Naive thymus-derived CD4-positive, alpha-beta T cell (primary cell): ENCODE measurements at regions of chr17 and their contacts with region 1.

Region 1: DNA sequence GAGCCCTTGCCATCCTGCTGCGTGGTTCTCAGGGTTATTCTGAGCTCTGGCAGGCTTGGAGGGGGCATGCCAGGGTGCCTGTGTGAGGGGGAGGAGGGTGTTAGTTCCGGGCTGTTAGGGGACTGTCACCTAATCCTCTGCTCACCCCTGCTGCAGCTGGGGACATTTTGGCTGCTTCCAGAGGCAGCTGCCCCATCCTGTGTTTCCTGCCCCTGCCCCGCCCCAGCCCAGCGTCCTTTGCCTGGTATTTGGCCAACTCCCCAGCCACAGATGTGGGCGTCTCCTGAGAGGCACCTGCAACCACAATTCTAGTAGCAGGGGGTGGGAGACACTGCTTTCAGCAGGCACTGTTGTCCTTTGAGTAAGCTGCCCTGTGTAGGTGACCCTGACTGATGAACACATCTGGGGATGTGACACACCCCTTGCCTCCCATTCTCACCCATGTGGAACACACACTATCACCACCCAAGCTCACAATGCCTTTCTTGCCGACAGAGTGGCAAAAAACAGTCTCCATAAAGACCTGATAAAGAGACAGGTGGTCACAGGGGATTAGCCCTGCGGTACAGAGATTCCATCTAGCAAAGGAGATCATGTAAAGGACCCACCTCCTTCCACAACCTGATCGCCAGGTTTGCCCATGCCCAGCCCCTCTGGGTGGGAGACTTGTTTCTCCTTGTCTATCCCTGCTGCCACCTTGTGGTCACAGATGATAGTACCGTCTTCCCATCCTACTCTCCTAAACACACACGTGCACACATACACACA is at the start of gene CHRNE:
- DNase-seq: peak in 8 of 9 donors; percentile 63 to 80 (median 76)
- ATAC-seq: peak; percentile 41
- H3K4me3 ChIP-seq: peak within 1 kb of the TSS; percentile 29
- H3K4me3 Mint-ChIP-seq: peak within 1 kb of the TSS; percentile 37 to 84 (median 72)
- H3K27ac ChIP-seq: no peak within 1 kb of the TSS
- H3K27ac Mint-ChIP-seq: peak within 1 kb of the TSS; percentile 57 to 98 (median 71)
- H3K4me1 ChIP-seq: peaks cover 29 to 40% of the 10 kb centered on the region in 2 donors
- H3K4me1 Mint-ChIP-seq: peaks cover 14 to 46% (median 37%) of the 10 kb centered on the region in 7 donors
- H3K27me3 ChIP-seq: no peaks in the 10 kb centered on the region
- H3K27me3 Mint-ChIP-seq: peaks cover 0 to 20% (median 0%) of the 10 kb centered on the region in 5 donors
- total RNA-seq, gene CHRNE: 0.34 to 6.5 (median 1.0) TPM

Region 2: GRCh38 chr17:4565209-4566141 is 337.8 kb before region 1 on chr17:
- CTCF ChIA-PET with region 1: interaction called, 3 read pairs
- POLR2A ChIA-PET with region 1: no interaction called
- intact Hi-C with region 1: loop called (anchors 1 to 5 kb)
- DNase-seq: peak in 8 of 9 donors; percentile 29 to 60 (median 50)
- ATAC-seq: peak; percentile 90
- H3K4me3 ChIP-seq: no peak overlapping the region
- H3K4me3 Mint-ChIP-seq: peak overlapping the region in 9 of 10 donors; percentile 44 to 77 (median 70)
- H3K27ac ChIP-seq: no peak overlapping the region
- H3K27ac Mint-ChIP-seq: peak overlapping the region in 3 of 9 donors; percentile 15 to 41 (median 21)
- H3K4me1 ChIP-seq: peaks cover 7 to 11% of the 10 kb centered on the region in 2 donors
- H3K4me1 Mint-ChIP-seq: peaks cover 15 to 40% (median 33%) of the 10 kb centered on the region in 7 donors
- H3K27me3 ChIP-seq: no peaks in the 10 kb centered on the region
- H3K27me3 Mint-ChIP-seq: peaks cover 0 to 17% (median 0%) of the 10 kb centered on the region in 5 donors

Region 3: DNA sequence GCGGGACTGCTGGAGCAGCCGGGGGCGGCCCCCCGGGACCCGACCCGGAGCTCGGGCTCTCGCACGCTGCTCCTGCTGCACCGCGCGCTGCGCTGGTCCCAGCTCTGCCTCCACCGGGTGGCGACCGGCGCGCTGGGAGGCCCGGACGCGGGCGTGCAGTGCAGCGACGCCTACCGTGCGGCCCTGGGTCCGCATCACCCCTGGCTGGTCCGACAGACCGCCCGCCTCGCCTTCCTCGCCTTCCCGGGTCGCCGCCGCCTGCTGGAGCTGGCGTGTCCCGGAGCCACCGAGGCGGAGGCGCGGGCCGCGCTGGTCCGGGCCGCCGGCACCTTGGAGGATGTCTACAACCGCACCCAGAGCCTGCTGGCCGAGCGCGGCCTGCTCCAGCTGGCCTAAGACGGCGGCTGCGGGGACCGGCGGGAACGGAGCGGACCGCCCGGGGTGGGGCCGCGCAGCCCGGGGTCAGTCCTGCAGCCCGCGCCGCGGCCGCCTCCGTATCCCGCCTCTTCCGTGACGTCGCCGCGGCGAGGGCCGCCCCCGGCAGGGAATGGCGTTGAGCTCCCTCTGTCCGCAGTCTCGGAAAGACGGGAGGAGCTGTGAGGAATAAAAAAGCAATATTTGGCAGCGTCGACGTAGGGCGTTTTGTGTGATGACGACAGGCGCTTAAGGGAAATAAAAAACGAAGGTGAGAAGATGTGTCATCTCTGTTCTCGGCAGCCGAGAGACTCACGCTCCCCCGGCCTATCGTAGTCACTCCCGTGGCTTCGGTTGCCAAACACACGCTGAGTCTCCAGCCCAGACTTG is 113.1 kb before region 1 on chr17:
- CTCF ChIA-PET with region 1: interaction called, 4 read pairs
- POLR2A ChIA-PET with region 1: no interaction called
- intact Hi-C with region 1: loop called in 1 of 2 experiments (anchors 5 kb)
- DNase-seq: peak; percentile 66 to 87 (median 78)
- ATAC-seq: peak; percentile 93
- H3K4me3 ChIP-seq: peak overlapping the region; percentile 75
- H3K4me3 Mint-ChIP-seq: peak overlapping the region; percentile 67 to 94 (median 88)
- H3K27ac ChIP-seq: peak overlapping the region; percentile 73
- H3K27ac Mint-ChIP-seq: peak overlapping the region; percentile 1 to 93 (median 89)
- H3K4me1 ChIP-seq: peaks cover 15 to 20% of the 10 kb centered on the region in 2 donors
- H3K4me1 Mint-ChIP-seq: peaks cover 11 to 34% (median 19%) of the 10 kb centered on the region in 7 donors
- H3K27me3 ChIP-seq: peaks cover 0 to 11% of the 10 kb centered on the region in 2 donors
- H3K27me3 Mint-ChIP-seq: peaks cover 23 to 49% (median 31%) of the 10 kb centered on the region in 5 donors

Region 4: DNA sequence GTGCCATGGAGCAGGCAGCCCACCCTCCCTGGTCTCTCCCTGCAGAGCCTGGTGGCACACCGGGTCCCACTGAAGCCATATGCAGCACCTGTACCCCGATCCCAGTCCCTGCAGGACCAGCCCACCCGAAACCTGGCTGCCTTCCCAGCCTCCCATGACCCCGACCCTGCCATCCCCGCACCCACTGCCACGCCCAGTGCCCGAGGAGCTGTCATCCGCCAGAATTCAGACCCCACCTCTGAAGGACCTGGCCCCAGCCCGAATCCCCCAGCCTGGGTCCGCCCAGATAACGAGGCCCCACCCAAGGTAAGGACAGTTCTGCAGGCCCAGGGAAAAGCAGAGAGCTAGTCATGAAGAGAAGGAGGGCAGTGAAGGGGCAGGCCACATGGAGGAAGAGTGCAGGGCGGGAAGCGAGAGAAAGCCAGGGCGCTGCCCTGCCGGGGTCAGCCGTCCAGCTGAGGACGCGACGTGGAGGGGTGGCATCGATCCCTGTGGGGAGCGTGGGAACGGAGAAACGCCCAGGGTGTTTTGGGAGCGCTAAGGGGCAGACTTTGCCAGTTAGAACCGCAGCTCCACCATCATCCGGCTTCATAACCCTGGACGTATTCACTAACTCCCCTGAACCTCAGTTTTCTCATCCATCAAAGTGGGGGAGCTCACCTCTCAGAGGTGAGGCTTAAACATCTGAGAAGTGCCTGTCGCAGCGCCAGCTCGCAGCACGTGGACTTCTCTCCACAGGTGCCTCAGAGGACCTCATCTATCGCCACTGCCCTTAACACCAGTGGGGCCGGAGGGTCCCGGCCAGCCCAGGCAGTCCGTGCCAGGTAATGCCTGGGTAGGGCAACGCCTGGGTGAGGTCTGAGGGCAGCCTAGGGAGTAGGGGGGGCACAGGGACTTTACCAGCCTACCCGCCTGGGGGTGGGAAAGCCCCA is 11.6 kb before region 1 on chr17:
- CTCF ChIA-PET with region 1: interaction called, 4 read pairs
- POLR2A ChIA-PET with region 1: no interaction called
- intact Hi-C with region 1: loop called in 1 of 2 experiments (anchors 1 kb)
- DNase-seq: no peak
- ATAC-seq: no peak
- H3K4me3 ChIP-seq: no peak overlapping the region
- H3K4me3 Mint-ChIP-seq: no peak overlapping the region
- H3K27ac ChIP-seq: no peak overlapping the region
- H3K27ac Mint-ChIP-seq: no peak overlapping the region
- H3K4me1 ChIP-seq: no peaks in the 10 kb centered on the region
- H3K4me1 Mint-ChIP-seq: peaks cover 0 to 5% (median 2%) of the 10 kb centered on the region in 7 donors
- H3K27me3 ChIP-seq: no peaks in the 10 kb centered on the region
- H3K27me3 Mint-ChIP-seq: no peaks in the 10 kb centered on the region

Region 5: GRCh38 chr17:4939796-4940624 is 36.8 kb after region 1 on chr17 and contains the starts of genes RNF167 and SLC25A11:
- CTCF ChIA-PET with region 1: no interaction called
- POLR2A ChIA-PET with region 1: interaction called, 25 read pairs
- intact Hi-C with region 1: loop called (anchors 1 to 2 kb)
- DNase-seq: peak; percentile 86 to 99 (median 98)
- ATAC-seq: peak; percentile 94
- H3K4me3 ChIP-seq: peak within 1 kb of the TSS; percentile 89
- H3K4me3 Mint-ChIP-seq: peak within 1 kb of the TSS; percentile 92 to 100 (median 98)
- H3K27ac ChIP-seq: peak within 1 kb of the TSS; percentile 89
- H3K27ac Mint-ChIP-seq: peak within 1 kb of the TSS; percentile 89 to 98 (median 95)
- H3K4me1 ChIP-seq: peaks cover 47 to 48% of the 10 kb centered on the region in 2 donors
- H3K4me1 Mint-ChIP-seq: peaks cover 52 to 77% (median 66%) of the 10 kb centered on the region in 7 donors
- H3K27me3 ChIP-seq: no peaks in the 10 kb centered on the region
- H3K27me3 Mint-ChIP-seq: no peaks in the 10 kb centered on the region
- total RNA-seq, gene RNF167: 97.3 to 248 (median 148) TPM
- total RNA-seq, gene SLC25A11: 27.0 to 82.6 (median 44.1) TPM

Region 6: DNA sequence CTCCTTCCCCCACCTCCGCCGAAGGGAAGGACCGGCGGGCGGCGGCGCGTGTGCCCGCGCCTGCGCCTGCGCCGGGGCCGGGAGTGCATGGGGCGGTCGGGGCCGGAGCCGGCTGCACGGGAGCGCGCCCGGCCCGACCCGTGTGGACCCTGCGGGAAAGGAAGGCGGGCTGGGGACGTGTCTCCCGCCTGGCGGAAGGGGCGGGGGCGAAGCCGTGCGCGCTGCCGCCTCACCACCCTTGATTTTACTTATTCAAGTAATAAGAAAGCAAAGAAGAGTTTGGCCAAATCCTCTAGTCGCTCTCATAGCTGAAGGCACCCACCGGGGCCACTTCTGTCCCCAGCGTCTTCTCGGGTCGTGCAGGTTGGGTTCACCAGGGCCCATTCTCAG is 45.7 kb after region 1 on chr17:
- CTCF ChIA-PET with region 1: no interaction called
- POLR2A ChIA-PET with region 1: interaction called, 12 read pairs
- intact Hi-C with region 1: loop called in 1 of 2 experiments (anchors 1 kb)
- DNase-seq: peak in 7 of 9 donors; percentile 69 to 84 (median 79)
- ATAC-seq: peak; percentile 58
- H3K4me3 ChIP-seq: peak overlapping the region; percentile 98
- H3K4me3 Mint-ChIP-seq: peak overlapping the region; percentile 92 to 100 (median 98)
- H3K27ac ChIP-seq: peak overlapping the region; percentile 89
- H3K27ac Mint-ChIP-seq: peak overlapping the region; percentile 83 to 100 (median 96)
- H3K4me1 ChIP-seq: peaks cover 27 to 35% of the 10 kb centered on the region in 2 donors
- H3K4me1 Mint-ChIP-seq: peaks cover 37 to 50% (median 43%) of the 10 kb centered on the region in 7 donors
- H3K27me3 ChIP-seq: no peaks in the 10 kb centered on the region
- H3K27me3 Mint-ChIP-seq: peaks cover 0 to 2% (median 0%) of the 10 kb centered on the region in 5 donors

Region 7: DNA sequence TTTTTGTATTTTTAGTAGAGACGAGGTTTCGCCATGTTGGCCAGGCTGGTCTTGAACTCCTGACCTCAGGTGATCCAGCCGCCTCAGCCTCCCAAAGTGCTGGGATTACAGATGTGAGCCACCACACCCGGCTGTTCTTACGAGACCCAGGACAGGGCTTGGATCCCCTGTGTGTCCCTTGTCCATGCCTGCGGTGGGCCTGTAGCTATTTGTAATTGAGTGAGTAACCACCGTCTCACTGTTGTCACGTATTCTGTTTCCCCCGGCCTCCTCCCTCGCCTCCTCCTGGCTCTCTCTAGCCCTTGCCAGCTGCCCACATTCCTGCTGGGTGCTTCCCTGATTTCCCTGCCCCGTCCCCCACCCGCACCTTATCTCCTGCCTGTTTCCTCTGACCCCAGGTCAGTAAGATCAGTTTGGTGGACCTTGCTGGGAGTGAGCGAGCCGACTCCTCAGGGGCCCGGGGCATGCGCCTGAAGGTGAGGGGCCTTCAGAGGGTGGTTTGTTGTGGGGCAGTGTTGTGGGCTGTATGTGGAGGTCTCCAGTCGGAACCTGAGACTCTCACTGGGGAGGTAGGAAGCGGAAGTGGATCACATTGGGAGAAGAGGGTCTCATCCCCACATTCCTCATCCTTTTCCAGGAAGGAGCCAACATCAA is 100.1 kb after region 1 on chr17:
- CTCF ChIA-PET with region 1: no interaction called
- POLR2A ChIA-PET with region 1: no interaction called
- intact Hi-C with region 1: no loop called
- DNase-seq: no peak
- ATAC-seq: no peak
- H3K4me3 ChIP-seq: no peak overlapping the region
- H3K4me3 Mint-ChIP-seq: no peak overlapping the region
- H3K27ac ChIP-seq: no peak overlapping the region
- H3K27ac Mint-ChIP-seq: no peak overlapping the region
- H3K4me1 ChIP-seq: peaks cover 4 to 8% of the 10 kb centered on the region in 2 donors
- H3K4me1 Mint-ChIP-seq: peaks cover 11 to 22% (median 17%) of the 10 kb centered on the region in 7 donors
- H3K27me3 ChIP-seq: no peaks in the 10 kb centered on the region
- H3K27me3 Mint-ChIP-seq: no peaks in the 10 kb centered on the region